Heart left ventricle (tissue), 16 donors: ENCODE measurements at regions of chr2 and their contacts with region 1.

Region 1: DNA sequence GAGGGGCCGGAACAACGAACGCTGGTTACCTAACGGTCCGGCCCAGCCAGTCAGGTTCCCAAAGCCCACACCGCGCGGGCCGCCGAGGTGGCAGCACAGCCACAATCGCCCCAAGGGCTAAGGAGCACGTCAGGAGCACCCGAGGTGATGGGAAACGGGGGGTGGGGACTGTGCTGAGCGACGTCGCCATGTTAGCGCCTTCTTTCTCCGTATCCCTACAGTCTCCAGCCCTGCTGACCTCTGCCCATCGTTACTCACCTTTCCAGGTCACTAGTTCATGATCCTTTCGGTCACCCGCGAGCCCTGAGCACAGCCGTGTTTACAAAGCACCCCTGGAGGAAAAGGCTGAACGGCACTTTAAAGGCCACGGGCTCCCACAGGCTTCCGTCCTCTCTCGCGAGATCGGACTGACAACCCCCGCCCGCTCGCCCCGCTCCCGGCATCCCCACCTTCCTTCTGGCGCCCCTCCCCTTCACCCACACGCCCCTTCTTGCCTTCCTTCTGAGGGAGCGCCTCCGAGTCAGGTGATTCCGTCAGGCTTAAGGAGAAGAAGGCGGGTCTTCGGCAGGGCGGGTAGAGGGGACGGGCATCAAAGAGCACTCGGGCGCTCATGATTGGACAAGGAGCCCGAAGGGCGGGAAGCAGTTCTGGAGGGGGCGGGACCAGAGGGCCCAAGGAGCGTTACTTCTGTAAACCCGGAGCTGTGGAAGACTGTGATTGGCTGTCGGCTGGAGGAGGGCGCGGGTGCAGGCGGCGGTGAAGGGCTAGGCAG is at the start of gene ATF2:
- DNase-seq: peak; percentile 98 to 100 (median 99)
- ATAC-seq: peak; percentile 98 to 99 (median 98)
- H3K4me3 ChIP-seq: peak within 1 kb of the TSS; percentile 60 to 96 (median 87)
- H3K27ac ChIP-seq: peak within 1 kb of the TSS; percentile 92 to 99 (median 96)
- H3K4me1 ChIP-seq: peaks cover 0 to 38% (median 14%) of the 10 kb centered on the region in 12 donors
- H3K27me3 ChIP-seq: no peaks in the 10 kb centered on the region
- CTCF ChIP-seq: no peak
- POLR2A ChIP-seq: peak in 1 of 2 donors; percentile 66
- total RNA-seq, gene ATF2: 17.1 to 41.5 (median 28.5) TPM

Region 2: DNA sequence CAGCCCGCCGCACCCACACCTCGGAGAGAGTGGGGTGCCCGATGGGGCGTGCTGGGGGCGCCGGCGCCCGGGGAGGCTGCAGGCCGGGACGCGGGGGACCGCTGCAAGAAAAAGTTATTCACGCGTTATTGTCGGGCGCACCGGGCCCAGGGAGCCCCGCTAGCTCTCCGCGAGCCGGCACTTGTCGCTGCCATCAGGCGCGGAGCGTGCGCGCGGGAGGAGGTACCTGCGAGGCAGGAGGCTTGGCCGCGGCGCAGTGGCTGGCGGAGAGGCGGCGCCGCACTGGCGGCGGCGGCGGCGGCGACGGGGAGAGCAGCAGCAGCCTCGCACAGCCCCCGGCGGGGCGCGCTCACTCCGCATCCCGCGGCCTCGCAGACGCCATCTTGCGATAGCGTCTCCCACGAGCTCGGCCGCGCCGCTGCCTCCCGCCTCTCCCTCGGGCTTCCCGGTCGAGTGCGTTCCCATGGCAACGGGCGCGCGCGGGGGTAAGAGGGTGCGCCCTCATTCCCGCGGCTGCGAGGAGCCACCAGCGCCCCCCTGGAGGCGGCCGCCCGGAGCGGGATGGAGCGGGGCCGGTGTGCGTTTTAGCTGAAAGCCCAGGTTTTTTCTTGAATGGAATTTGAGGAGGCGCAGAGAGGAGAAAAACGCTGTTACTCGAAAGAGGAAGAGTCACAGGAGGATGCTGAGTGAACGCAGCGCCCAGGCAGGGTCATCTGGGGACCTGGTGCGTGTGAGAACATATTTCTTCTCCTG is 162.8 kb before region 1 on chr2 and contains the start of gene CHN1:
- intact Hi-C with region 1: loop called in 1 of 10 experiments (anchors 10 kb)
- DNase-seq: peak; percentile 87 to 93 (median 89)
- ATAC-seq: peak; percentile 47 to 90 (median 80)
- H3K4me3 ChIP-seq: peak within 1 kb of the TSS; percentile 64 to 92 (median 86)
- H3K27ac ChIP-seq: peak within 1 kb of the TSS; percentile 43 to 96 (median 90)
- H3K4me1 ChIP-seq: peaks cover 0 to 59% (median 24%) of the 10 kb centered on the region in 12 donors
- H3K27me3 ChIP-seq: peaks cover 0 to 42% (median 0%) of the 10 kb centered on the region in 9 donors
- CTCF ChIP-seq: peak in 5 of 12 donors; percentile 16 to 44 (median 24)
- POLR2A ChIP-seq: peak in 1 of 2 donors; percentile 61
- total RNA-seq, gene CHN1: 8.6 to 24.3 (median 19.3) TPM

Region 3: GRCh38 chr2:175111200-175111657 is 56.7 kb before region 1 on chr2:
- intact Hi-C with region 1: loop called in 3 of 10 experiments (anchors 5 to 10 kb)
- DNase-seq: no peak
- ATAC-seq: peak in 1 of 4 donors; percentile 53
- H3K4me3 ChIP-seq: no peak overlapping the region
- H3K27ac ChIP-seq: no peak overlapping the region
- H3K4me1 ChIP-seq: no peaks in the 10 kb centered on the region
- H3K27me3 ChIP-seq: no peaks in the 10 kb centered on the region
- CTCF ChIP-seq: peak; percentile 72 to 87 (median 78)
- POLR2A ChIP-seq: no peak

Region 4: DNA sequence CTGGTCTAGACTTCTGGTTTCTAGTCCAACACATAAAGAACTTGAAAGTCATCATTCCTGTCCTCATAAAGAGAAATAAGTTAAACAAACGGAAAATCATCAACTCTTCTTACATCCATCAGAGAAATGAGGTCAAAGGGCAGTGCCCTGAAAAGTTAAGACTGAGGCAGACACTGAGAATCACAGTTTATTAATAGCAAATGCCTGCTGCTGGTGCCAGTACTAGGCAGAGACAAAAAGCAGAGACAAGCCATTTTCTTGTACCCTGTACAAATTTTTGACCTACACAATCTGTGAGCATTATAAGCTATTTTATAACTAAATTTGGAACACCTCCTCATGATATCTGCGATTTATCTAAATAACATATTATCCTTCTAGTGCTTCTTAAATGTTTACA is 36.7 kb before region 1 on chr2:
- intact Hi-C with region 1: loop called in 1 of 10 experiments (anchors 5 kb)
- DNase-seq: no peak
- ATAC-seq: peak; percentile 71 to 89 (median 84)
- H3K4me3 ChIP-seq: no peak overlapping the region
- H3K27ac ChIP-seq: peak overlapping the region in 4 of 12 donors; percentile 15 to 35 (median 16)
- H3K4me1 ChIP-seq: peaks cover 0 to 26% (median 4%) of the 10 kb centered on the region in 12 donors
- H3K27me3 ChIP-seq: no peaks in the 10 kb centered on the region
- CTCF ChIP-seq: no peak
- POLR2A ChIP-seq: no peak

Region 5: GRCh38 chr2:175181104-175181876 is 13.3 kb after region 1 on chr2 and contains the start of gene ATP5MC3:
- intact Hi-C with region 1: loop called in 1 of 10 experiments (anchors 1 kb)
- DNase-seq: peak; percentile 93 to 98 (median 97)
- ATAC-seq: peak; percentile 93 to 98 (median 96)
- H3K4me3 ChIP-seq: peak within 1 kb of the TSS; percentile 65 to 98 (median 90)
- H3K27ac ChIP-seq: peak within 1 kb of the TSS; percentile 93 to 98 (median 96)
- H3K4me1 ChIP-seq: peaks cover 0 to 42% (median 29%) of the 10 kb centered on the region in 12 donors
- H3K27me3 ChIP-seq: no peaks in the 10 kb centered on the region
- CTCF ChIP-seq: peak in 3 of 12 donors; percentile 3 to 35 (median 19)
- POLR2A ChIP-seq: peak; percentile 80 to 91
- total RNA-seq, gene ATP5MC3: 474 to 1,123 (median 986) TPM